GM10248 (cell line): ENCODE measurements at regions of chr3 and their contacts with region 1.

Region 1: GRCh38 chr3:127750226-127751031 is 71.9 kb downstream of the MGLL start:
- DNase-seq: no peak
- CTCF ChIP-seq: no peak

Region 2: GRCh38 chr3:127717357-127718244 is 32.8 kb before region 1 on chr3:
- CTCF ChIA-PET with region 1: no interaction called
- POLR2A ChIA-PET with region 1: no interaction called
- DNase-seq: no peak
- CTCF ChIP-seq: no peak

Region 3: GRCh38 chr3:127735767-127736704 is 14.4 kb before region 1 on chr3:
- CTCF ChIA-PET with region 1: interaction called, 24 read pairs
- POLR2A ChIA-PET with region 1: interaction called, 5 read pairs
- DNase-seq: peak; percentile 60
- CTCF ChIP-seq: no peak

Region 4: GRCh38 chr3:127915115-127915936 is 164.9 kb after region 1 on chr3 and contains the start of gene KBTBD12:
- CTCF ChIA-PET with region 1: no interaction called
- POLR2A ChIA-PET with region 1: no interaction called
- DNase-seq: no peak
- CTCF ChIP-seq: no peak

Region 5: GRCh38 chr3:128395500-128396162 is 645.2 kb after region 1 on chr3:
- CTCF ChIA-PET with region 1: no interaction called
- POLR2A ChIA-PET with region 1: no interaction called
- DNase-seq: no peak
- CTCF ChIP-seq: no peak